ENCODE measurements at regions of chr2 and their contacts with region 1.

Region 1: DNA sequence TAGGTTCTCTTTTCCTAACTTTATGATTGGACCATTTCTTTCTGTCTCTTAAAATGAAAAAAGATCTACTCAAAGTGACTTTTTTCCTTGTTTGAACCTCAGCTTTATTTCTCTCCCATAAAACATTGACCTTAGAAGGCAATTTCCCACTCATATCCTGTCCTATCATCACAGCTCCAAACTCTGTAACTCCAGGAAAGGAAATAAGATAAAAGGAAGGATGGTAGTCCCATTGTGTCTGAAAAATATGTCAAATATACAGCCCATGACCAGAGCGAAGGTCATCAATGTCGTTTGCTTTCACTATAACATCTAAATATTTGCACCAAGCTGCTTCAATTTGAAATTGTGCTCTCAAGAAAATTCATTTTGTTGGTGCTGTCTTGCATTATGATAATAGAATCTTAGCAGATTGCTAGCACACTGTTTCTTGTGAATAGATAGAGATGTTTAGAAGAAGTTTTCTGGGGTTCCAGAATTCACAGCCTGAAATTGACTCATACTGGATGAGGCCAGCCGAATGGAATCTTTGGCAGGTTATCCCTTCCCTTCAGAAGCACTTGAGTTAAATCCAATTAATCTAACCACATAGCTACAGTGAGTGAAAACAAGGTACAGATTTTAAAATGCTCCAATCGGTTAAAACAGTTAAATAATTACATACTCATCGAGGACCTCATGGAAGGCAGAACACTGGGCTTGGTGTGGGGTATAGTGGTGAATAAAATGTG is 95.1 kb downstream of the CRIM1 start:
- DNase-seq: no peak
- H3K4me3 ChIP-seq: no peak overlapping the region
- H3K27ac ChIP-seq: peak overlapping the region; percentile 73
- H3K4me1 ChIP-seq: peaks cover 100% of the 10 kb centered on the region
- H3K27me3 ChIP-seq: no peaks in the 10 kb centered on the region
- CTCF ChIP-seq: no peak
- POLR2A ChIP-seq: no peak

Region 2: GRCh38 chr2:36403675-36404230 is 46.9 kb before region 1 on chr2:
- CTCF ChIA-PET with region 1: no interaction called
- POLR2A ChIA-PET with region 1: interaction called, 12 read pairs
- dilution Hi-C with region 1: no loop called
- intact Hi-C with region 1: no loop called
- DNase-seq: peak; percentile 79
- H3K4me3 ChIP-seq: no peak overlapping the region
- H3K27ac ChIP-seq: peak overlapping the region; percentile 92
- H3K4me1 ChIP-seq: peaks cover 96% of the 10 kb centered on the region
- H3K27me3 ChIP-seq: no peaks in the 10 kb centered on the region
- CTCF ChIP-seq: no peak
- POLR2A ChIP-seq: peak; percentile 64

Region 3: GRCh38 chr2:36618028-36618780 is 167.6 kb after region 1 on chr2:
- CTCF ChIA-PET with region 1: no interaction called
- POLR2A ChIA-PET with region 1: no interaction called
- dilution Hi-C with region 1: no loop called
- intact Hi-C with region 1: no loop called
- DNase-seq: peak; percentile 83
- H3K4me3 ChIP-seq: no peak overlapping the region
- H3K27ac ChIP-seq: no peak overlapping the region
- H3K4me1 ChIP-seq: no peaks in the 10 kb centered on the region
- H3K27me3 ChIP-seq: no peaks in the 10 kb centered on the region
- CTCF ChIP-seq: no peak
- POLR2A ChIP-seq: no peak